H1 (cell line): ENCODE measurements at regions of chr13 and their contacts with region 1.

Region 1: DNA sequence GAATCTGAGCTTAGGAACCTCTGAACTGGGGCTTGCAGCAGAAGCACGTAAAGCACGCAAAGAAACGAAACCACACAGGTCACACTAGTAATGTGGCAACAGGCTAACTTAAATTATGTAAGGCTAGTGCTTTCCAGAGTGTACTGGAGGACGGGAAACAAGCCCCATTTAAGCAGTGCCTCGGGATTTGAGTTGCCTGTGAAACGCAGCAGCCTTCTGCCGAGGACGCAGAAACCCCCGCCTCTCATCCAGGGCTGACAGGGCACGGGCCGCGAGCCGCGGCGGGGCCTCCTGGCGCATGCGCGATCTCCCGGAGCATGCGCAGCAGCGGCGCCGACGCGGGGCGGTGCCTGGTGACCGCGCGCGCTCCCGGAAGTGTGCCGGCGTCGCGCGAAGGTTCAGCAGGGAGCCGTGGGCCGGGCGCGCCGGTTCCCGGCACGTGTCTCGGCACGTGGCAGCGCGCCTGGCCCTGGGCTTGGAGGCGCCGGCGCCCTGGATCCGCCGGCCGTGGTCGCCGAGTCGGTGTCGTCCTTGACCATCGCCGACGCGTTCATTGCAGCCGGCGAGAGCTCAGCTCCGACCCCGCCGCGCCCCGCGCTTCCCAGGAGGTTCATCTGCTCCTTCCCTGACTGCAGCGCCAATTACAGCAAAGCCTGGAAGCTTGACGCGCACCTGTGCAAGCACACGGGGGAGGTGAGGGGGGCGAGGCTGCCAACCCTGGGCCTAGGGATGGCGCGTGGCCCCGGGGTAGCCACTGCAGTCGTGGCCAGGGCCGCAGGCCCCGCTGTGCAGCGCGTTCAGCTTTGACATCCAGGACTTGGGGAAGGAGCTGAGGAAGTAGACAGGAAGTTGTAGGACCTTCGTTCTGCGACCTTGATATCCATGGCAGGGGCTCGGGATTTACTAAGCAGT is at the start of gene GTF3A:
- DNase-seq: peak; percentile 46 to 87
- H3K4me3 ChIP-seq: peak within 1 kb of the TSS; percentile 68 to 78 (median 71)
- H3K27ac ChIP-seq: no peak within 1 kb of the TSS; the same call in 1 of the 2 replicates
- H3K4me1 ChIP-seq: peaks cover 0 to 17% (median 9%) of the 10 kb centered on the region in 4 experiments; a peak in 5 of 7 replicates
- H3K27me3 ChIP-seq: peaks cover 0 to 5% (median 3%) of the 10 kb centered on the region in 4 experiments; a peak in 2 of 7 replicates
- CTCF ChIP-seq: no peak
- EP300 ChIP-seq: no peak
- POLR2A ChIP-seq: peak in 1 of 2 experiments; percentile 49; a peak in 2 of 3 replicates
- RAD21 ChIP-seq: no peak
- total RNA-seq, gene GTF3A: 92.3 and 96.5 TPM in 2 replicates

Region 2: GRCh38 chr13:27334774-27335435 is 89.6 kb before region 1 on chr13:
- CTCF ChIA-PET with region 1: no interaction called
- POLR2A ChIA-PET with region 1: no interaction called
- DNase-seq: no peak
- H3K4me3 ChIP-seq: no peak overlapping the region
- H3K27ac ChIP-seq: no peak overlapping the region
- H3K4me1 ChIP-seq: peaks cover 7 to 22% (median 11%) of the 10 kb centered on the region in 4 experiments
- H3K27me3 ChIP-seq: peaks cover 0 to 3% (median 1%) of the 10 kb centered on the region in 4 experiments; a peak in 2 of 7 replicates
- CTCF ChIP-seq: no peak
- EP300 ChIP-seq: no peak
- POLR2A ChIP-seq: no peak
- RAD21 ChIP-seq: no peak

Region 3: GRCh38 chr13:27374650-27375049 is 49.9 kb before region 1 on chr13:
- CTCF ChIA-PET with region 1: interaction called, 38 read pairs
- POLR2A ChIA-PET with region 1: interaction called, 5 read pairs
- DNase-seq: no peak
- H3K4me3 ChIP-seq: no peak overlapping the region
- H3K27ac ChIP-seq: no peak overlapping the region
- H3K4me1 ChIP-seq: peaks cover 0 to 5% (median 3%) of the 10 kb centered on the region in 4 experiments; a peak in 2 of 7 replicates
- H3K27me3 ChIP-seq: peaks cover 0 to 3% (median 1%) of the 10 kb centered on the region in 4 experiments; a peak in 2 of 7 replicates
- CTCF ChIP-seq: peak; percentile 46 to 85 (median 82)
- EP300 ChIP-seq: no peak
- POLR2A ChIP-seq: no peak
- RAD21 ChIP-seq: peak; percentile 87 to 88

Region 4: GRCh38 chr13:27379694-27380641 is 44.5 kb before region 1 on chr13:
- CTCF ChIA-PET with region 1: interaction called, 38 read pairs
- POLR2A ChIA-PET with region 1: interaction called, 5 read pairs
- DNase-seq: peak; percentile 78 to 95
- H3K4me3 ChIP-seq: no peak overlapping the region; a peak in 1 of 8 replicates
- H3K27ac ChIP-seq: no peak overlapping the region
- H3K4me1 ChIP-seq: peaks cover 0 to 16% (median 10%) of the 10 kb centered on the region in 4 experiments; a peak in 6 of 7 replicates
- H3K27me3 ChIP-seq: no peaks in the 10 kb centered on the region
- CTCF ChIP-seq: peak; percentile 74 to 80 (median 79)
- EP300 ChIP-seq: no peak
- POLR2A ChIP-seq: no peak
- RAD21 ChIP-seq: peak; percentile 83 to 88

Region 5: GRCh38 chr13:27406178-27406939 is 18.1 kb before region 1 on chr13:
- CTCF ChIA-PET with region 1: interaction called, 28 read pairs
- POLR2A ChIA-PET with region 1: interaction called, 3 read pairs
- DNase-seq: no peak
- H3K4me3 ChIP-seq: no peak overlapping the region
- H3K27ac ChIP-seq: no peak overlapping the region
- H3K4me1 ChIP-seq: peaks cover 6 to 10% (median 8%) of the 10 kb centered on the region in 4 experiments; a peak in 6 of 7 replicates
- H3K27me3 ChIP-seq: no peaks in the 10 kb centered on the region
- CTCF ChIP-seq: peak in 2 of 3 experiments; percentile 31 to 52; a peak in 2 of 4 replicates
- EP300 ChIP-seq: no peak
- POLR2A ChIP-seq: no peak
- RAD21 ChIP-seq: peak; percentile 44 to 47

Region 6: DNA sequence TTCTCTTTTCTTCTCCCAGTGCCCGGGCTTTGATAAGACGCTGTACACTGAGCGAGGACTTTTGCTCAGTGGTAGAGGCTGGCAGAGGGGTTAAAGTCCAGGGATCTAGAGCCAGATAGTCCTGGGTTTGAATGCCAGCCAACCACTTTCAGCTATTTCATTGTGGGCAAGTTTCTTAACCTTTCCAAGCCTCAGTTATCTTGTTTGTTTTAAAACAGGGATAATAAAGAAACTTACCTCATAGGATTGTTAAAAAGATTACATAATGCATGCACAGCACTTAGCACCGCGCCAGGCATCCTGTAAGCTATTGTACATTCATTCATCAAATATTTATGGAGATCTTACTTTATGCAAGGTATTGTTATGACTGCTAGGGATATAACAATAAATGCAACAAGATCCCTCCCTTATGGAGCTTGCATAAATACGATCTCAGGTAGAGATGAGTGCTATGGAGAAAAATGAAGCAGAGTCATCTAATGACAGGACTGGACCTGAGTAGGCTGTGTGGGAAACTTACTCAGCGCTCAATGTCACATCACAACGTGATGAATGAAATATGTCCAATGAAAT is 125.0 kb after region 1 on chr13:
- CTCF ChIA-PET with region 1: no interaction called
- POLR2A ChIA-PET with region 1: no interaction called
- DNase-seq: no peak
- H3K4me3 ChIP-seq: no peak overlapping the region
- H3K27ac ChIP-seq: no peak overlapping the region
- H3K4me1 ChIP-seq: no peaks in the 10 kb centered on the region
- H3K27me3 ChIP-seq: no peaks in the 10 kb centered on the region
- CTCF ChIP-seq: no peak
- EP300 ChIP-seq: no peak
- POLR2A ChIP-seq: no peak
- RAD21 ChIP-seq: no peak